Common myeloid progenitor, CD34-positive (primary cell): ENCODE measurements at regions of chr3 and their contacts with region 1.

Region 1: DNA sequence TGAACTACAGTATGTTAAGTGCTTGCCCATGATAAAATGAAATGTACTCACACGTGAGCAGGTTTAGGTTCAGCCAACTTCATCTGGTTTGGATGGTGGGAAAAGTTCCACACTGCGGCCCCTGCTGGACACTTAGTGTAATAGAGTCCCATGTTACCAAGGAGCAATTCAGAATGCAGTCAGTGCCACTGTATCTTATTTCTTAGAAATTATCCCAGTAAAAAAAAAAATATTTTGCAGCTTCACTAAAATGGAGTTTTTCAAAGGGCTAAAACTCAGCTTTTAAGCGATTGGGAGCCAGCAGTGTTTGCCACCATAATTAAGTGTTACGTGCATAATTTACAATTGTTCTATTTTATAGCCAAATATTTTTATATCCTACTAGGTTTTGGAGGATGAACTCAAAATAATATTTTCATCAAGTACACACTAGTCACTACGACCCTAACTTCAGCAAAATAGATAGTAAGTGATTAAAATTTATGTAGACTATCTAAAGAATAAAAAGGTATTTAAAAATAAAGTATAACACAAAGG is 371.7 kb upstream of the GBE1 start:
- DNase-seq: peak; percentile 67 to 82 (median 74)
- H3K4me3 ChIP-seq: no peak overlapping the region
- H3K27ac ChIP-seq: no peak overlapping the region
- H3K4me1 ChIP-seq: peaks cover 5 to 17% (median 10%) of the 10 kb centered on the region in 4 experiments
- H3K27me3 ChIP-seq: no peaks in the 10 kb centered on the region

Region 2: DNA sequence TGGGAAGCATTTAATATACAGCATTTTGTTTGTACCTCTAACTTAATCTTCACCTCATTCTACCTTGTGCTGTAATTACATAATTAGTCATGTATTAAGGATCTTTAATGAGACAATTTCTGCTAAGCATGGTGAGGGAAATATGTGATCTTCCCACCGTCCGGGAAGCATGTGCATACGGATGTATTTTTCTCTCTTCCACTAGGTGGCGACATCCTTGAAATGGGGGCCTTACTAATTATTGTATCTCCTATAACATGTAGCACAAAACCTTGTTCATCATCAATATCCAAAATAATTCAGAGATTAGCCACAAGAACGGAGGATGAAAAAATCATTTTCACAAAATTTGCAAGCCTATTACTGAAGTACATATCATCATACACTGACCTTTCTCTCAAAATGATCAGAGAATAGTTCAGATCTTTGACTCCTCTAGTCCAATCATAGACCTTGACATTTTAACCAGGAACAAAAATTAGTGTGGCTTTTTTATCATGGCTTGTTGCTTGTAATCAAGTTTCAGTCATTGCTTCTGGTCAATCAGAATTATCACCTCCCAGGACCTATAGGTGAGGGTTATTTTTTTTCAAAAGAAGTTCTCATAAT is 222.8 kb before region 1 on chr3:
- CTCF ChIA-PET with region 1: interaction called, 16 read pairs
- POLR2A ChIA-PET with region 1: no interaction called
- DNase-seq: peak; percentile 35 to 53 (median 51)
- H3K4me3 ChIP-seq: no peak overlapping the region
- H3K27ac ChIP-seq: no peak overlapping the region
- H3K4me1 ChIP-seq: peaks cover 0 to 6% (median 4%) of the 10 kb centered on the region in 4 experiments
- H3K27me3 ChIP-seq: no peaks in the 10 kb centered on the region

Region 3: DNA sequence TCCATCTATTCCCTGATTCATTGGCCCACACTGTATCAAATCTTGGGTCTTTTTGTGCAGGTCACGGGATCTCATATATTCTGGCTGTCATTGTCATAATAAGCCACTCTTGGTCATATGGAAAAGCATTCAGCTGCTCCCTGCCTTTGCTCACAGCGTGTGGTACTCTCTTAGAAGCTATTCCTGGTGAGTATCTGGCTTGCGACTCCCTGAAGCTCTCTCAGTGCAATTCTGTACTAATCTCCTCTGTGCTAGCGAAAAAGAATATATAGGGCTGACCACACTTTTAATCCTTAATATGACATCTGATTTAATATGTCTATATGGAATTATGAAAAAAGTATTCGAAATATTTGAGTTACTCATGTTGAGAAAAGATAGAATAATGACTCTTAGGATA is 69.1 kb after region 1 on chr3:
- CTCF ChIA-PET with region 1: no interaction called
- POLR2A ChIA-PET with region 1: no interaction called
- DNase-seq: no peak
- H3K4me3 ChIP-seq: no peak overlapping the region
- H3K27ac ChIP-seq: no peak overlapping the region
- H3K4me1 ChIP-seq: no peaks in the 10 kb centered on the region
- H3K27me3 ChIP-seq: no peaks in the 10 kb centered on the region